ENCODE measurements at regions of chr11 and their contacts with region 1.

Region 1: GRCh38 chr11:128848815-128849455 is 18.2 kb downstream of the KCNJ1 start:
- DNase-seq: peak; percentile 77
- H3K4me3 ChIP-seq: no peak overlapping the region
- H3K27ac ChIP-seq: no peak overlapping the region
- H3K4me1 ChIP-seq: no peaks in the 10 kb centered on the region
- H3K27me3 ChIP-seq: peaks cover 9% of the 10 kb centered on the region
- CTCF ChIP-seq: peak; percentile 98

Region 2: DNA sequence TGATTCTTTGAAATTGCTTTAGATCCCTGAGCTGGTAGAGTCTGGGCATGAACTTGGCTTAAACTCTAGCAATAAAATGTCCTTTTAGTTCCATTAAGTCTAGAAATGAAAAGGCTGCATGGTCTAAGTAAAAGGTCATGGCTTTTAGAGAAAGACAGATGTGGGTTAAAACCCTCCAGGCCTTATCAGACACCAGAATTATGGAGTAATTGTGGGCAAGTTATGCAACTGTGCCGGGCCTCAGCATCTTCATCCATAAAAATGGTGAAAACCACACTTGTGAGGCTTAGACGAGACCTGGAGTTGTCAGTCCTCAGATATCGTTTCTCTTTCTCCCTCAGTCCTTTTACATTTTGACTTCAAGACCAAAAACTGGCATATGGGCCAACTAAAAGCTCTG is 1250.5 kb before region 1 on chr11:
- CTCF ChIA-PET with region 1: no interaction called
- POLR2A ChIA-PET with region 1: no interaction called
- intact Hi-C with region 1: no loop called
- DNase-seq: no peak
- H3K4me3 ChIP-seq: no peak overlapping the region
- H3K27ac ChIP-seq: no peak overlapping the region
- H3K4me1 ChIP-seq: no peaks in the 10 kb centered on the region
- H3K27me3 ChIP-seq: peaks cover 15% of the 10 kb centered on the region
- CTCF ChIP-seq: no peak

Region 3: DNA sequence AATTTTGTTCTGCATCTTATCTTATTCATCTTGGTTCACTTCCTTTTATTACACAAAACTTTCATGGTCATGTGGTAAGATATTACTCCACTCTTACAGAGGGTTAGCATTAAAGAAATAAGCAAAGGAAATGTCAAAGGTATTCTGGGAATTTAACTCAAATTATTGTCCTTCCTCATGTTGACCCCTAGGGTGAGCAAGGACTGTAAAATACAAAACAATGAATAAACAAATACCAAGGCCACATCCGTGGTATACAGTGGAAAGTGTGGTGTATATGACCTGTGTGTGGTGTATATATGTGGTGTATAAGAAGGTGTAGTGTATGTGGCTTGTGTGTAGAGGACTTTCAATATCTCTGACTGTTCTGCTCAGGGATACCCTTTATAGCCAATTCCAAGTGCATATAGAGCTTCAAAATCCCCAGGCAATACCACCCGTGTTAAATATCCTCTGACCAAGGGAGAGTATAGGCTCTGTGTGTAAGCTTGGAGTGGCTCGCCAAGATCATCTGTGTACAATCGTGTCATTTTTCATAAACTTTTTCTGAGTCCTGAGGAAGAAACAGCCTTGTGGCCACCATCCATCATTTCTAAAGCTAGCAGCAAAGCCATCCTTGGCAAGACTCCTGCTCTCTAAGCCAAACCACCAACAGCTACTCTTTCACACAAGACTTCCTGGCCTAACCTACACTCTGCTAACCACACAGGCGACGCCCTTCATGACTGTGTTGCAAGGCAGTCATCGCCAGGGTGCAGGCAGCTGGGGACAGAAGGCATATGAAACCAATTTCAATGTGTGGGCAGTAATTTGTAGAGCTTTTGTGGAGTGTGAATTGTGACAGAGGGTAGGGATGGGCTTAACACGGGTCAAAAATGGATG is 809.6 kb before region 1 on chr11:
- CTCF ChIA-PET with region 1: no interaction called
- POLR2A ChIA-PET with region 1: no interaction called
- intact Hi-C with region 1: loop called (anchors 5 kb)
- DNase-seq: peak; percentile 73
- H3K4me3 ChIP-seq: no peak overlapping the region
- H3K27ac ChIP-seq: no peak overlapping the region
- H3K4me1 ChIP-seq: no peaks in the 10 kb centered on the region
- H3K27me3 ChIP-seq: no peaks in the 10 kb centered on the region
- CTCF ChIP-seq: no peak